PC-9 (cell line): ENCODE measurements at regions of chr5 and their contacts with region 1.

Region 1: DNA sequence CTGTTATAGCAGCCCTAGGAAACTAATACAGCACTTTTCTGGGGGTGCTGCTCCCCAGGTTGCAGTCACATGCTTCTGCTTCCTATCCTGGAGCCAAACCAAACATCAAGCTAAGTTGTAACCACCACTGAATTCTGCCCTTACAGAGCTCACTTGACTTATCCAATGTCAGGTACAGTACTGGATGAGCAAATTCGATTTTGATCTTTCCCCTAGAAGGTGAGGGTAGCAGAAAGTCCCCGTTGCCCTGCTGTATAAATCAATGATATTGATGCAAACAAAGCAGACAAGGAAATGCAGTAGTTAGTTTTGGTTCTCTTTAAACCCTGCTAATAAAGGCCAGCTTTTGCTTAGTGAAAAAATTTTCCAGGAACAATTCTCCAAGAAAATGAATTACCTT is 36.4 kb downstream of the ZCCHC9 start:
- DNase-seq: no peak
- H3K4me3 ChIP-seq: no peak overlapping the region
- H3K27ac ChIP-seq: no peak overlapping the region
- H3K4me1 ChIP-seq: no peaks in the 10 kb centered on the region
- H3K27me3 ChIP-seq: no peaks in the 10 kb centered on the region
- CTCF ChIP-seq: no peak

Region 2: DNA sequence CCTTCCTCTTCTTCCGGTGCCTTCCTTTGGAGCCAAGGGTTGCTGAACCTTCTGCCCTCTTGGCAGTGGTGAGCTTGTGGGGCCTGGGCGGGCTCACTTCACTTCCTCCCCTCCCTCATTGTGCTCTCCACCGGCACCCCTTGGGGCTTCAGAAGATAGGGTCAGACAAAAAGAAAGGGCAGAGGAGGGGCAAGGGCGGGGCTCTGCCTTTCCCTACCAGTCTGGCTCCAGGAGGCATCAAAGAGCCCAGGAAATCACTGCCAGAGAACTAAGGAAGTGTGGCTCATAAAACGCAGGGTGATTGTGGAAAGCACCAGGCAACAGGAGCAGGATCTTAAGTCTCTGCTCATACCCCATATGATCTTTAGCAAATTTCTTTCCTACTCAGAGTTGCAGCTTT is 21.3 kb after region 1 on chr5:
- CTCF ChIA-PET with region 1: no interaction called
- POLR2A ChIA-PET with region 1: interaction called, 17 read pairs
- intact Hi-C with region 1: no loop called
- DNase-seq: no peak
- H3K4me3 ChIP-seq: no peak overlapping the region
- H3K27ac ChIP-seq: no peak overlapping the region
- H3K4me1 ChIP-seq: no peaks in the 10 kb centered on the region
- H3K27me3 ChIP-seq: no peaks in the 10 kb centered on the region
- CTCF ChIP-seq: no peak

Region 3: DNA sequence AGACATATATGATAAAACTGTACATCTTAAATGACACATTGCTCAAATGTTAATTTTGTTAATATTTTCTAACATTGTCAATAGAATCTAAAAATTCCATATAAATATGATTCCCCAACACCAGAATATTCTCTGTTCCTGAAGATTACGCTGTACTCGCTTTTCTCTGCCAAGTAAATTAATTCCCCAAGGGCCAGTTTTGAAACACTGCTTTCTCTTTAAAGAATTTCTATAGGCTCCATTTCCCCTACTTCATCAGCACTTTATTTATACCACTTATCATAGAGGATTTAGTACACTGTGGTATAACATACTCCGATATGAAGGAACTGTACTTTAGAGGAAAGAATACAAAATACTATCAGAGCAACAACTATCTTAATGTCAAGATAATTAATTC is 157.5 kb after region 1 on chr5:
- CTCF ChIA-PET with region 1: no interaction called
- POLR2A ChIA-PET with region 1: no interaction called
- intact Hi-C with region 1: no loop called
- DNase-seq: no peak
- H3K4me3 ChIP-seq: no peak overlapping the region
- H3K27ac ChIP-seq: no peak overlapping the region
- H3K4me1 ChIP-seq: no peaks in the 10 kb centered on the region
- H3K27me3 ChIP-seq: no peaks in the 10 kb centered on the region
- CTCF ChIP-seq: no peak